ENCODE measurements at regions of chr1 and their contacts with region 1.

Region 1: DNA sequence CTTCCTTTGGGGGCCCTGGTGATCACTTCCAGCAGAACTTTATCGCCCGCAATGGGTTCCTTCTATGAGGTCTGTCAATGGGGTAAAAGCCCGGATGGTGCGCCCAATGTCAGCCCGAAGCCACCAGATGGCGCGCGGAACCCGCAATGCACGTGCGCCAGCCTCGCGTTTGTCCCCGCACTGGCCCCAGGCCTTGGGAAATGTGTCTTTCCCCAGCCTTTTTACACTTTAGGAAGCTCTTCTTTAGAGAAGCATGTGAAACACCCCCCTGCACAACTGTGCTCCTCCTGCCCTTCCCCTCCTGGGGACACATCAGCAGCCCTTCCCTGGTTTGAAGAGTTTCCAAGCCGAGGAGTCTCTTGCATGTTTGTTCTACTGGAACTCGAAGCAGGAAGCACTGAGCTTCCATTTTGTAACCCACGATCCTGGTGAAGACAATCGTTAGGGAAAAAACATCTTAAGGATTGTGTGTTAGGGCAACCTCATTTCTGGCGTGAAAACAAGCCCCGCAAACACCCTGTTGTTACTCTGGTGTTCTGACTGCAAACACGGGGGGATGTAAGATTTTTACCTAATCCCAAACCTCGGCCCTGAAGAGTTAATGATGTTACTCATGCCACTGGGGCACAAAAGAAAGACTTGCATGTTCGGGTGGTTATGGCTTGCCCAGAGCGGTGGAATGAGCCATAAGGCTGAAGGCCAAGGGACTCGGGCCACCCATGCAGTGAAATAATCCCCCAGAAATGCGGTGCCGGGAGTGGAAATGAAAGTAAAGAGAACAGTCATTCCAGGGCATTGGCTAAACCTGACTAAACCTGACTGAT is 20.4 kb upstream of the TARBP1 start:
- DNase-seq: peak; percentile 75 to 92
- H3K4me3 ChIP-seq: peak overlapping the region; percentile 16; the same call in 1 of the 2 replicates
- H3K27ac ChIP-seq: peak overlapping the region; percentile 85
- H3K4me1 ChIP-seq: peaks cover 90% of the 10 kb centered on the region
- H3K27me3 ChIP-seq: no peaks in the 10 kb centered on the region
- CTCF ChIP-seq: peak; percentile 95

Region 2: DNA sequence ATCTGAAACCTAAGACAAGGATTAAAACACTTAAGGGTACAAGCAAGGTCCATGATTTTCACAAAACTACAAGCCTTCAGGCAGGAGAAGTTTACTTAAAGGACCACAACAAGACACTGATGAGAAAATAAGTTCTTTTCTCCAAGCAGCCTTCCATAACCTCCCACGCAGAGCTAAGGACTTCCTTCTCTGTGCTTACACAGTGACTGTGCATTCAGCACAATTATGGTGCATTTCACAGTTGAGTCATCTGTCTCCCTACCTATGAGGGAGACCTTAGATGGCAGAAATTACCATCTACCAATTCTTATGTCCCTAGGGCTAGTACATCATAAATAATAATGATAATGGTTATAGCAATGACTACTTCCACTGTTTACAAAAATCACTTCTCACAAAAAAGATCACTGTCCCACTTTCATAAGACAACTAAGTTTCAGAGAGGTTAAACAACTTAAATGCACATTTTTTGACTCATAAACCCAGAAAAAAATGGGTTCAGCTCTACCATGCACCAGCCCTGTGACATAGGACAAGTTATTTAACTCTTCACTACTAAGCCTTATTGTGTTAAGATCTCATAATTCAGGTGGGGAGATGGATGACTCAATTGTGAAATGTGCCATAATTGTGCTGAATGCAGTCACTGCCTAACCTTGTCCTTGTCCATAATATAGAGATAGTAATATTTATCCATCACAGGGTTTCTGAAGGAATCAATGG is 65.6 kb before region 1 on chr1:
- CTCF ChIA-PET with region 1: no interaction called
- POLR2A ChIA-PET with region 1: no interaction called
- intact Hi-C with region 1: no loop called
- DNase-seq: peak in 1 of 2 experiments; percentile 50
- H3K4me3 ChIP-seq: no peak overlapping the region
- H3K27ac ChIP-seq: no peak overlapping the region
- H3K4me1 ChIP-seq: no peaks in the 10 kb centered on the region
- H3K27me3 ChIP-seq: no peaks in the 10 kb centered on the region
- CTCF ChIP-seq: no peak

Region 3: DNA sequence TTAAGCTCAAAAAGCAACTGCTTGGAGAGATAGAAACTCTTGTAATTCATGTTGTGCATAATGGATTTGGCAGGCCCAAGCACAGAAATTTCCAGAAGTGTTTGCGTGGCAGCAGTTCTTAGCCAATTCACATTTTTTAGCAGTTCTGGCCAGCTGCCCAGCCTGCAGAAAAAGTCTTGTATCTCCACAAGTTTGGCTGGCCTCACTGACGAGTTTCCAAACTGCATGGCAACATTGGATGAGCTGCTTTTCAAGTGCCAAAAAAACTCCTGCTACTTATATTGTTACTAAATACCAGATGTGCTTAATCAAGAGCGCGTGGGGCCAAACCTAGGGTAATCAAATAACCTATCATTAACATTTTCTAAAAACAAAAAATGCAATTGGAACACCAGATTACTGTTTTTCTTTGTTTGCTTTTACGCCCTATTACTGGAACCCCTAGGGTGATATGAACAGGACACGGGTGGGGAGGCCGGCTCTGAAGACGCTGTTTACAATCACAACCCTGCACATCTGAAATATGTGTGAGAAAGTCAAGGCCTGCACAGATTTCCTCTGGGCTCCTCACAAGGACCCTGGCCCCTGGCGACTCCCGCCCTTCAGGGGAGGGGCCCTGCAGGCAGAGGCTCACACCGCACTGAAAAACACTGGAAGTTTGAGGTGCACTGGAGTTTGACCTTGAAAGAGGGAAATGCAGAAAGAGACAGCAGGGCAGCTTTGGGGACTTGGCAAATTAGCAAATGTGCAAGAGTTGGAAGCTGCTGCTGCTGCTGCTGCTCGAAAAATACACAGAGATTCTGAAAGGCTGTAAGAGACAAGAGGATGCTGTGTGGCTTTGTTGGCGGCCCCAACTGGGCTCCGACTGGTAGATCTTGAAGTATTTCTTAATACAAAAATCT is 34.9 kb after region 1 on chr1:
- CTCF ChIA-PET with region 1: no interaction called
- POLR2A ChIA-PET with region 1: interaction called, 15 read pairs
- intact Hi-C with region 1: no loop called
- DNase-seq: peak; percentile 28 to 56
- H3K4me3 ChIP-seq: no peak overlapping the region
- H3K27ac ChIP-seq: peak overlapping the region; percentile 90
- H3K4me1 ChIP-seq: peaks cover 49% of the 10 kb centered on the region
- H3K27me3 ChIP-seq: no peaks in the 10 kb centered on the region
- CTCF ChIP-seq: no peak

Region 4: DNA sequence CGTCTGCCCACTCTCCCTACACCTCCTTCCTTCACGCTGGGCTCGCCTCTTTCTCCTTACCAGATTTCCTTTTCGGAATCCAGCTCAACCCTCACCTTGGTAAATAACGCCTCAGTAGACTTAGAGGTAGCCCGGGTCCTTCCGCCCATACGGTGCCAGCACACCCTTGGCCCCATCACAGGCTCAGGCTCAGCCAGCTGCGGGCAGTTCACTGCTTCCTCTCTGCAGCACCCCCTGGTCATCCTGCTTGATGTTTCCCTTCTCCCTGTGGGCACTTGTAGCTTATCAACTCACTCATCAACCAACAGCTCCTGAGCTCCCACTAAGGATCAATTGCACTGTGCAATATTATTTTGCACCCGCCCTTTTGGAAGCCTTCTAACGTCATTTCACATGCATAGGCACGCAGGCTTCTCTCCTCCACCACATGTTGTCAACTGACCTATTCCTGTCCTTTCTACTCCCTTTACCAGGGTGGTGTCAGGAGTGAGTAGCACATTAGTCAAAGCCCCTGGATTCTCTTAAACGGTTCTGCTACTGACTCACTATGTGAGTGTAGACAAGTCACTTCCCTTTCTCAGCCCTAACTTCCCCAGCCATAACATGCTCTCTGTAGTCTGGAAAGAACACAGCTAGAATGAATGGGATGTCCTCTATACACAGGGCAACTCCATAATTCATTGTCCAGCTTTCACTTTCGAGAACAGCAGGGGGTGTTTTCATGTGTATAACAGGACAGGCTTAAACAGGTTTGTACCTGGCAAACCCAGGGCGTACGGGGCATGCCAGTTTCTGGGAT is 157.7 kb after region 1 on chr1:
- CTCF ChIA-PET with region 1: interaction called, 3 read pairs
- POLR2A ChIA-PET with region 1: no interaction called
- intact Hi-C with region 1: loop called (anchors 1 kb)
- DNase-seq: peak; percentile 50 to 95
- H3K4me3 ChIP-seq: peak overlapping the region; percentile 69
- H3K27ac ChIP-seq: peak overlapping the region; percentile 99
- H3K4me1 ChIP-seq: peaks cover 59% of the 10 kb centered on the region
- H3K27me3 ChIP-seq: no peaks in the 10 kb centered on the region
- CTCF ChIP-seq: no peak

Region 5: DNA sequence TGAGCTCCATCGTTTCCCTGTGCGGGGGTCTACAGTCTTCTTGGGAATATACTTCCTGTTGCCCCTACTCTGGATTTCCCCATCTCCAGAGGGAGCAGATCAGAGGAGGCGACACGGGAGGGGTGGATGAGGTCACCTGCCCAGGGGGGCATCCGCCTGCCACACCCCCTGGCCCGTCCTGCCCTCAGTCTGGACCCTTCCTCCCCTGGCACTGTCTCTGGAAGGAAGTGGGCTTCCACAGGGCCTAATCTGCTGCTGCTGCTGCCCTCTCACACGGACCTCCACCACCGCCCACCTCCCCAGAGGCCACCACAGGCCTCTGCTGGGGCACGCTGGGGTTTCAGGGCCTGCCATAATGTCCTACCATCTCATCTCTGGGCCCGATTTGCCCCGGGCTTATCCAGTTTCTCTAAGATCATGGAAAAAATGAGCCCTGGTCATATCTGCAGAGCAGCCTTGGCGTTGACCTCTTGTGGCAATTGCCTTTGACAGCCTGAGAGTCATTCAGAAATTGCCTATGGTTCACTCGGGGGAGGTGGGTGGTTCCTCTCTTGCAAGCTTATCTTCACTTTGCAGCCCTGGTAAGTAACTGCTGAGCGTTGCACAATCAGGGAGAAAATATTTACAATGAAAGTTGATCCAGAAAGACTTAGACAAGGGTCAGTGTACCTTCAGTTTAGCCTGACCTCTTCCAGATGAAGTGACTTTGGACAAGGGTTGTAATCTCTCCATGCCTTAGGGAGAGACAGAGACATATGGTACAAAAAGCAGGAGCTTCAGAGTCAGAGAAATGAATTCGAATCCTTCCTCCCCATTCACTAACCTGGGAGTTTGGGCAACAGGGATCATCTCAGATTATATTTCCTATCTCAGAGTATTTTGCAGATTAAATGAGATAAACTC is 376.9 kb after region 1 on chr1:
- CTCF ChIA-PET with region 1: no interaction called
- POLR2A ChIA-PET with region 1: interaction called, 6 read pairs
- intact Hi-C with region 1: loop called (anchors 1 kb)
- DNase-seq: peak; percentile 70 to 98
- H3K4me3 ChIP-seq: peak overlapping the region; percentile 45; the same call in 1 of the 2 replicates
- H3K27ac ChIP-seq: peak overlapping the region; percentile 99
- H3K4me1 ChIP-seq: peaks cover 70% of the 10 kb centered on the region
- H3K27me3 ChIP-seq: no peaks in the 10 kb centered on the region
- CTCF ChIP-seq: no peak

Region 6: GRCh38 chr1:234963180-234963903 is 464.0 kb after region 1 on chr1:
- CTCF ChIA-PET with region 1: interaction called, 7 read pairs
- POLR2A ChIA-PET with region 1: no interaction called
- intact Hi-C with region 1: loop called (anchors 1 kb)
- DNase-seq: peak; percentile 90 to 99
- H3K4me3 ChIP-seq: peak overlapping the region; percentile 38
- H3K27ac ChIP-seq: peak overlapping the region; percentile 99
- H3K4me1 ChIP-seq: peaks cover 84% of the 10 kb centered on the region
- H3K27me3 ChIP-seq: no peaks in the 10 kb centered on the region
- CTCF ChIP-seq: no peak

Region 7: DNA sequence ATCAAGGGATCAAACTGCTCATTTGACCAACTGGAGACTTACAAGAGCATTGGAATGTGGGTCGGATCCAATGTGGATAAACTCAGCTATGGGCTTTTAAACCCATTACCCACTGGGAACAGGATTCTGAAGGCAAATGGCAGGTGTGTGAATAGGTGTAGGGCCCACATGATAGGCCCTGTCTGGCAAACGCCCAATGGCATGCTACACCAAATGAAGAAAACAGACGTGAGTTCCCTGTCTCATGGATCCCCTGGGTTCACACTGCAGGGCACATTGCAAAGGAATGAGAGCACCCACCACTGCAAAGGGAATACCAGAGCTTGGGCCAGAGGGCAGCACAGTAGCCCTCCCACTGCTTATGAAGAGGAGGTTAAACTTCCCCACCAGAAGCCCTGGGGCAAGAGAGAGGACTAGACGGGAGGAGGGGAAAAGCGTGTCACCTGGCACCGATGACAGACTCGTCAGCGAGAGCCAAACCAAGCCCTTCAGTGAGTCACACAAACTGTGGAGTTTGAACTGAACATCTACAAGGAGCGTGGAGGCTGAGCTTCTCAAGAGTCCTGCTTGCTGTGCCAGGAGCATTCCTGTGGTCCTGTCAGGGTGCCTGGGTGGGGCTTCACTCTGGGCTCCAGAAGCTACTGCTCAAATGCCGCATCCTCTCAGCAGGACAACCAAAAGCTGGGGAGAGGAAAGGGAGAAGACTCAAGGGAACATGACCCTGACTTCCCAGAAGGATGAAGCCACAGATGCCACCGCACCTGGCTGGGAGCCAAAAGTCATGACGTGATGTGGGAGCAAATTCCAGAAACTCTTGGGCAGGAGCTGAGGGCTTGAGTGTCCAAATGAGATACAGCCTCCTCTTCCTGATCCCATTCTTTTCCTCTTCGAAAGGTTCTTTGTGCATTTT is 568.2 kb after region 1 on chr1:
- CTCF ChIA-PET with region 1: interaction called, 4 read pairs
- POLR2A ChIA-PET with region 1: interaction called, 11 read pairs
- intact Hi-C with region 1: loop called (anchors 1 kb)
- DNase-seq: peak; percentile 98 to 100
- H3K4me3 ChIP-seq: peak overlapping the region; percentile 39; the same call in 1 of the 2 replicates
- H3K27ac ChIP-seq: peak overlapping the region; percentile 100
- H3K4me1 ChIP-seq: peaks cover 68% of the 10 kb centered on the region
- H3K27me3 ChIP-seq: no peaks in the 10 kb centered on the region
- CTCF ChIP-seq: no peak

Measured in PC-9 (cell line).